Activated T-helper 2 cell treated with anti-CD3 and anti-CD28 coated beads, Interferon-gamma antibody, Interleukin-2, Interleukin-4, amounts not matched to agents 10 μg/mL and 5 μg/mL and 100 μg/mL, durations not matched to agents 14 hours and 24 hours and 36 hours (primary cell): ENCODE measurements at regions of chr2 and their contacts with region 1.

Region 1: DNA sequence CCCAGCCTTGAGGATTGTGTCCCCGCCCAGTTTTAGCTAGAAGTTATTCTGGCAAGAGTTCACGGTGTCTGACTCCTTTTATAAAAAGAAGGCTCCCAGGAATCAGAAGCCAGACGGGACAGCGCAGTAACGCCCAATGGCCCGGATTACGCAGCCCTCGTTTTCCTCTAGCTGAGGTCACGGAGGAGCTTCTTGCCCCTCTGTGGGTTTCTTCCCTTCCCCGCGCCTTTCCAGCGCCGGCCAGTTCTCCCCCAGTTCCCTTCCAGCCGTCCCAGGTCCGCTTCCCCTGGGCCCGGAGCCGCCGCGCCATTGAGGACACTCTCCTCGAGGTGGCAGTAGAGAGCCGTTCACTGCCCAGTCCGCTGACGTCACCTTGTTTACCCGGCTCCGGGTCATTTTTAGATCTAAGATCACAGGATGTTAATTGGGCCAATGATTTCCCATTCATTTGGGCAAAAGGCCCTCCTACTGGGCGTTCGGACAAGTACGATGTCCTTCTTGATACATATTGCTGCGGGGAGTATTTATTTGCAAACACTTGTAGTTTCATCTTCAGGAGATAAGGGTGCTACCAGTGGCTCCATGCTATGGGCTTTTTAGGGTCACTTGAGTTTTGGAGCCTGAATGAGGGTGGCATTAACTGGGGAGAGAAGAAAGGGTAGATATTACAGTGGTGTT is 81.5 kb upstream of the PPM1B start:
- DNase-seq: peak; percentile 74
- H3K4me3 Mint-ChIP-seq: peak overlapping the region; percentile 74
- H3K27ac Mint-ChIP-seq: peak overlapping the region; percentile 86
- H3K4me1 Mint-ChIP-seq: peaks cover 25% of the 10 kb centered on the region
- H3K27me3 Mint-ChIP-seq: no peaks in the 10 kb centered on the region

Region 2: DNA sequence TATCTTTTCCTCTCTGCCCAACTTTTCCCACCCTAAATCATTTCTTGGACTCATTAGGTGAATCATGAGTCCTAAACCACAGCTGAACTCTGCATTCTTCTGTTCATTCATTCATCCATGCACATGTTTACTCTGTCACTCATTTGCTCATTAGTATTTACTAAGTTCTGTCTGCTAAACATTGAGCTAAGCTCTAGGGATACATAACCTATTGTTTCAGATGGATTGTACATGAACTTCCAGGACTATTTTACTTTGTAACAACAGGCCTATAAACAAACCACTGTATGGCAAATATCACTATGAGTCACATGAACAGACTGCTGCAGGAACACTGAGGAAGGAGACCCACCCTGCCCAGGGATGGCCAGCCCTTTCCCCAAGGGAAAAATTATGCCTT is 328.0 kb before region 1 on chr2:
- intact Hi-C with region 1: no loop called
- DNase-seq: no peak
- H3K4me3 Mint-ChIP-seq: no peak overlapping the region
- H3K27ac Mint-ChIP-seq: peak overlapping the region; percentile 38
- H3K4me1 Mint-ChIP-seq: peaks cover 32% of the 10 kb centered on the region
- H3K27me3 Mint-ChIP-seq: no peaks in the 10 kb centered on the region

Region 3: GRCh38 chr2:44167940-44168680 is 80.9 kb after region 1 on chr2:
- intact Hi-C with region 1: loop called (anchors 5 kb)
- DNase-seq: peak; percentile 97
- H3K4me3 Mint-ChIP-seq: peak overlapping the region; percentile 94
- H3K27ac Mint-ChIP-seq: peak overlapping the region; percentile 99
- H3K4me1 Mint-ChIP-seq: peaks cover 29% of the 10 kb centered on the region
- H3K27me3 Mint-ChIP-seq: no peaks in the 10 kb centered on the region

Region 4: DNA sequence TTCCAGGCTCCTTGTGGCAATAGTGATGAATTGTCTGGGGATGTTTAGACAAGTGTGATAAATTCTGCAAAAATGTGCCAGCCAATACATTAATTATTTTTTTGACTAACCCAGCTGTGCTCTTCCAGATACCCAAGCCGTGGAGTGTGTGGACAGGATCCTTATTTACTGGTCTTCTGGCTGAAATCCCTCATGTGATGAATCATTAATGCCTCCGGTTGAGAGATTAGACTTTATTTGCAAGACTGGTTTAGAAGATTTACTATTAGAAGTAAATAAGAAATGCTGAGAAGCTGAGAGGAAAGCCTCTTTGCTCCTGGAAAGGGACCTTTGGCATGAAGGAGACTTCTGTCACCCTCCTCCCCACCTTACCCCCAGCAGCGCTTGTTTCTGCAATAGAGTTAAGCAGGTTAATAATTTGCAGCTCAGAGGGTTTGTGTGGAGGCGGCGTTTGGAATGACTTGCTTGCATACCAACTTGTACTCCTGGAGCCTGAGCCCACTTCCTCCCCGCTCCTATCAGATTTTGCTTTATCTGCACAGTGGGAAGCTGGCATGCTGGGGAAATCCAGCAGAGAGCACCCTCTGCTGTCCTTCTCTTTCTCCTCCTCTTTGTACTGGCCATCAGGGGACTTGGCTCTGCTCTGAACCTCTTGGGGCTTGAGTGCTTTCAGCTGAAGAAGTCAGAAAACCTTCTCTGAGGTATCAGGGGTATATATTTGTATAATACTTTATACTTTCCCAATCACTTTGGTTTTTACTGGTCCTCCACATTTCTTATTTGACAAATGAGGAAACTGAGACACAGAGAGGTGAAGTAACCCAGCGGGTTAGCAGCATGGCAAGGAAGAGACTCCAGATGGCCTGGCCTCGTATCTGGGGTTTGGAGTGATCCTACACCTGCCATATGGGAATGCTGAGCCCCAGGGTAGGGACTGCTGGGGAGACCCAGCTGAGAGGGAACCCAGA is 204.4 kb after region 1 on chr2:
- intact Hi-C with region 1: loop called (anchors 1 kb)
- DNase-seq: no peak
- H3K4me3 Mint-ChIP-seq: no peak overlapping the region
- H3K27ac Mint-ChIP-seq: no peak overlapping the region
- H3K4me1 Mint-ChIP-seq: peaks cover 6% of the 10 kb centered on the region
- H3K27me3 Mint-ChIP-seq: peaks cover 14% of the 10 kb centered on the region

Region 5: DNA sequence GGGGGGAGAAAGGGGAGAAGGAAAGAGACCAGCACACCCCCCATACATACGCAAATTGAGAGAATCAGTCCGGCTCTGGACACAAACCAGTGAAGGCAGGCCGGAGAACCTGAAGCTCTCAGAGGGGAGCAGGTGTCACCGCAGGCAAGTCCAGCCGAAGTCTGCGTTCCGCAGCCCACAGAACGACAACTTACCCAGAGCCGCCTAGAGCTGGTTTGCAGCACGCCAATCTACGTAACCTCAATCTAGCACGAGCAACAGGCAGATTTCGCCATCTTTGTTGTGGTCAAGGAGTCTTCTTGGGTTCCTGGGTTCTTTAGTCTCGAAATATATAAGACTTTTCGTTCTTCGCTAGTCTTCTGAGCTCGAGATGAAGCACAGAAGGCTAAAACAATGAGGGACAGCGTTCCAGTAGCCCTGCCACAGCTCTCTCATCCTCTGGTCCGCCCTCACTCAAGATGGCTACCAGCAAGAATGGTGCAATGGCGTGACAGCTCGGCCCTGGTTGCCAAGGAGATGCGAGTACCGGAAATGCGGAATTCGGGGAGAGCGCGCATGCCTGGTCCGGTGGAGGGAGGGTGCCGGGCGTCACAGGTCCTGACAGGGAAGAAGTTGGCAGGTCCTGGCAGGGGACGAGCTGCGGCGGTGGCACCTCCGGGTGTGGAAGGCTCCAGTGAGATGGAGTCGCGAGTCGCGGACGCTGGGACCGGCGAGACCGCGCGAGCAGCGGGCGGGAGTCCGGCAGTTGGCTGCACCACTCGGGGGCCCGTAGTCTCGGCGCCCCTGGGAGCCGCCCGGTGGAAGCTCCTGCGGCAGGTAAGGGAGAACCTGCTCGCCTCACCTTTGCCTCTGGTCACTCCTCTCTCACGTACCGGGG is 274.4 kb after region 1 on chr2 and contains the starts of genes CAMKMT and PREPL:
- intact Hi-C with region 1: loop called (anchors 2 kb)
- DNase-seq: peak; percentile 97
- H3K4me3 Mint-ChIP-seq: peak within 1 kb of the TSS; percentile 100
- H3K27ac Mint-ChIP-seq: peak within 1 kb of the TSS; percentile 99
- H3K4me1 Mint-ChIP-seq: peaks cover 36% of the 10 kb centered on the region
- H3K27me3 Mint-ChIP-seq: no peaks in the 10 kb centered on the region
- total RNA-seq, gene CAMKMT: 11.2 TPM in 2 replicates
- total RNA-seq, gene PREPL: 29.7 and 30.1 TPM in 2 replicates

Region 6: DNA sequence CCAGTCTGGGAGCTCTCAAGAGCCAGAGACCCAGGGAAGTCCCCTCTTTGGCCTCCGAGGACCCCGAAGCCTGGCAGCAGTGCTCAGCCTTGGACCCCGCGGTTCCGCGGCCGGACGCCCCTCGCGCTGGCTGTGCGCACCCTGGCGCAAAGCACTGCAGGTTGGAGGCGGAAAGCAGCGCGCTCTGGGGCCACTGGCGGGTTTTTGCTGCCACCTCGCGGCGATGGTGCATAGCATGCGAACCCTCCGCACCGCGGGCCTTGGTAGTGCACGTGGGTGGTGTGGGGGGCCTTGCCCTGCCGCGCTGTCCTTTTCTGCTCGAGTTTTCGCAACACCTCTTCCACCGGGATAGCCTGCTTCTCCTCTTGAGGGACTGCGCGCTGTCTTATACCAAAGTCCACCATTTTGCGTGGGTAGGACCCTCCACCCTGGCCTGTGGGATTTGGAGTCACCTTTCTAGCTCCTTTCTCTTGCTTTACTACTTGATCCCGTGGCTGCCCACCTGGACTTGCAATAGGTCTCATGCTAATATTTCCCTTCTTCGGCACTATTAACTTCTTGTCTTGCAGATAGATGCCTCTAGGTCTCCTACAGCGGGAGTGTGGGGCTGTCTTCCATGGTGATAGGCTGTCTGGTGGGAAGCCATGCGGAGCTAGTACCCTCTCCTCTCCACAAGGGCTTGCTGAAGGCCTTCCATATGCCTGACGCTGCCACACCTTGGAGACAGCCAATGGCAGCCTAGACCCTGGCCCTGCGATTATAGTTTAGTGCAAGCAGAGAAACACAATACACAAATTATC is 868.6 kb after region 1 on chr2:
- intact Hi-C with region 1: loop called (anchors 5 kb)
- DNase-seq: peak; percentile 70
- H3K4me3 Mint-ChIP-seq: no peak overlapping the region
- H3K27ac Mint-ChIP-seq: no peak overlapping the region
- H3K4me1 Mint-ChIP-seq: peaks cover 14% of the 10 kb centered on the region
- H3K27me3 Mint-ChIP-seq: peaks cover 62% of the 10 kb centered on the region